Gastrocnemius medialis (tissue), 4 donors: ENCODE measurements at regions of chr17 and their contacts with region 1.

Region 1: GRCh38 chr17:44947461-44948314 is at the start of gene KIF18B:
- DNase-seq: peak; percentile 74 to 83
- ATAC-seq: peak; percentile 100
- H3K4me3 ChIP-seq: peak within 1 kb of the TSS; percentile 60 to 76 (median 62)
- H3K27ac ChIP-seq: peak within 1 kb of the TSS; percentile 48 to 64 (median 54)
- H3K4me1 ChIP-seq: peaks cover 10% of the 10 kb centered on the region in 2 donors
- H3K27me3 ChIP-seq: peaks cover 3 to 6% (median 6%) of the 10 kb centered on the region in 3 donors
- CTCF ChIP-seq: no peak
- POLR2A ChIP-seq: peak in 1 of 2 donors; percentile 65
- total RNA-seq, gene KIF18B: 0.09 to 1.7 TPM in 2 of 4 donors, not detected in the others

Region 2: DNA sequence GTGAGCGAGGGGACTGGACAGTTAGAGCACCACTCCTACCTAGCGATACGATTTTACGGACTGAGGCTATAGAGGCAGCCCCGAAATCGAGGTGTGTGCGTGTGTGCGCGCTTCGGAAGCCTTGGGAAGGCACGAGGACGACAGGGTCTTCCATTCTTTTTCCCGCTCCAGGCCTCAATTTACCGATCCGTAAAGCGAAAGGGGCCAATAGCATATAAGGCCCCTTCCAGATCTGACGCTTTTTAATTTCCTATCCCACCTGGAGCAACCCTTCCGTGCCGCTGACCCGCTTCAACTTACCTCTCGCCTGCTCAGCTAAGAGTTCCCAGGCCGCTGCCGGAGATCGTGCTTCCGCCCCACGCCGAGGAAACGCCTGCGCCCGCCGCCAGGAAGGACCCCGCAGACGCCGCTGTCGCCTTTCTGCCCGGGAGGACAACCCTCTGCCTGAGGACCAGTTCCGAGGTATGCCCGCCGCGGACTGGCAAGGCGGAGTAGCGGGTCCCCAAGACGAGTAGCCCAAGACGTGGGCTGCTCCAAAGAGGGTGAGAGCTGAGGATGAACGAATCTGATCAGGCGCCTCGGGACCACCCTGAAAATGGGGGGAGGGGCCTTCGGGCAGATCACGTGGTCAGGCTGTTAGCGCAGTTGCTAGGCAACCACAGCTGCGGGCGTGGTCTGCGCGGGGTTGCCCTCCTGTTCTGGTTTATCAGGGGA is 48.5 kb before region 1 on chr17 and contains the start of gene EFTUD2:
- in situ Hi-C with region 1: no loop called
- intact Hi-C with region 1: loop called (anchors 5 kb)
- DNase-seq: peak; percentile 80 to 85
- ATAC-seq: peak; percentile 91 to 95
- H3K4me3 ChIP-seq: peak within 1 kb of the TSS; percentile 74 to 92 (median 83)
- H3K27ac ChIP-seq: peak within 1 kb of the TSS; percentile 91 to 99 (median 96)
- H3K4me1 ChIP-seq: peaks cover 20 to 23% of the 10 kb centered on the region in 2 donors
- H3K27me3 ChIP-seq: no peaks in the 10 kb centered on the region
- CTCF ChIP-seq: peak in 1 of 5 experiments; percentile 31
- POLR2A ChIP-seq: peak; percentile 30 to 41
- total RNA-seq, gene EFTUD2: 65.0 to 116 (median 81.3) TPM

Region 3: GRCh38 chr17:44968226-44969143 is 20.8 kb after region 1 on chr17 and contains the start of gene C1QL1:
- in situ Hi-C with region 1: no loop called
- intact Hi-C with region 1: loop called (anchors 1 kb)
- DNase-seq: peak; percentile 74 to 83
- ATAC-seq: peak; percentile 90 to 94
- H3K4me3 ChIP-seq: peak within 1 kb of the TSS; percentile 28 to 68 (median 50)
- H3K27ac ChIP-seq: no peak within 1 kb of the TSS
- H3K4me1 ChIP-seq: peaks cover 0 to 12% of the 10 kb centered on the region in 2 donors
- H3K27me3 ChIP-seq: peaks cover 45 to 53% (median 50%) of the 10 kb centered on the region in 3 donors
- CTCF ChIP-seq: no peak
- POLR2A ChIP-seq: no peak
- total RNA-seq, gene C1QL1: not detected